ENCODE measurements at regions of chr7 and their contacts with region 1.

Region 1: DNA sequence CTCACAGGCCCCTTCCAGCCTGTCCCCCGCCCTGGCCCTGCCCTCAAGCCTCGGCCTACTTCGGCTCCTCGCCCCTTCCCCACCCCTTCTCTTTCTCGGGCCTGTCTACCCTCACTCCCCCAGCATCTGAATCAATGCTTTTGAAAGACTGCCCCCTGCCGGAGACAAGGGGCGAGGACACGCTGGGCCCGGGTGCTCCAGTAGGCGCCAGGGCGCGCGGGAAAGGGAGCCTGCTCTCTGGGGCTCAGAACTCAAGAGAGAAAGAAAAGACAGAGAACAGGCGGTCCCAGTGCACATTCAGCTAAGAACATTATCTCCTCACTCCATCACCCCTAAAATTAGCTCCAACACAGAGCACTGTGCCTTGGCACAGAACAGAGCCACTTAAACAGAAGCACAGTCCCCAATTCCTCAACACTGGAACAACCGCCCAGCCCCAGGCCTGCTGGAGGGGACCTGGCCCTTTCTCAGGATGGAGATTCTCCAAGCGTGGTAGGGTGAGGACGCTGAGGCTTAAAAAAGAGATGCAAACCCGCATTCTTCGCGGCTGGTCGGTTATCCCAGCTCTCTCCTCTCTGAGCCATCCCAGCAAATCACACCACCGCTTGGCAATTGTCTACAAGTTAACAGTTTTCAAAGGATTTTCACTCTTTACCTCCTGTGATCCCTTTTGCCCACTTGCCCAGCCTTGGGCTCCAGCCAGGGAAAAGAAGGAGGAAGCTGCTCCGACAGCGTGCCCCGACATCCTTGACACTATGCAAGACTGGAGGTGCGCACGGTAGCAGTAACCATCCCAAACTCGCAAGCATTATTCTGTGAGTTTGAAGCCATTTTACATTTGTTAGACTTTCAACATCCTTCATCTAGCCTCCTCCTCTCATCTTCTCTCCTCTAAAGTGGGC is 2.1 kb downstream of the GIGYF1 start:
- DNase-seq: peak; percentile 91
- ATAC-seq: peak; percentile 78
- H3K4me3 Mint-ChIP-seq: peak overlapping the region; percentile 96
- H3K27ac Mint-ChIP-seq: peak overlapping the region; percentile 97
- H3K4me1 Mint-ChIP-seq: peaks cover 42% of the 10 kb centered on the region
- H3K27me3 Mint-ChIP-seq: no peaks in the 10 kb centered on the region
- CTCF ChIP-seq: peak; percentile 91

Region 2: GRCh38 chr7:100366411-100367238 is 325.3 kb before region 1 on chr7:
- CTCF ChIA-PET with region 1: no interaction called
- POLR2A ChIA-PET with region 1: no interaction called
- DNase-seq: no peak
- ATAC-seq: peak; percentile 2; the same call in 1 of the 2 replicates
- H3K4me3 Mint-ChIP-seq: no peak overlapping the region
- H3K27ac Mint-ChIP-seq: peak overlapping the region; percentile 72
- H3K4me1 Mint-ChIP-seq: peaks cover 31% of the 10 kb centered on the region
- H3K27me3 Mint-ChIP-seq: no peaks in the 10 kb centered on the region
- CTCF ChIP-seq: no peak

Region 3: DNA sequence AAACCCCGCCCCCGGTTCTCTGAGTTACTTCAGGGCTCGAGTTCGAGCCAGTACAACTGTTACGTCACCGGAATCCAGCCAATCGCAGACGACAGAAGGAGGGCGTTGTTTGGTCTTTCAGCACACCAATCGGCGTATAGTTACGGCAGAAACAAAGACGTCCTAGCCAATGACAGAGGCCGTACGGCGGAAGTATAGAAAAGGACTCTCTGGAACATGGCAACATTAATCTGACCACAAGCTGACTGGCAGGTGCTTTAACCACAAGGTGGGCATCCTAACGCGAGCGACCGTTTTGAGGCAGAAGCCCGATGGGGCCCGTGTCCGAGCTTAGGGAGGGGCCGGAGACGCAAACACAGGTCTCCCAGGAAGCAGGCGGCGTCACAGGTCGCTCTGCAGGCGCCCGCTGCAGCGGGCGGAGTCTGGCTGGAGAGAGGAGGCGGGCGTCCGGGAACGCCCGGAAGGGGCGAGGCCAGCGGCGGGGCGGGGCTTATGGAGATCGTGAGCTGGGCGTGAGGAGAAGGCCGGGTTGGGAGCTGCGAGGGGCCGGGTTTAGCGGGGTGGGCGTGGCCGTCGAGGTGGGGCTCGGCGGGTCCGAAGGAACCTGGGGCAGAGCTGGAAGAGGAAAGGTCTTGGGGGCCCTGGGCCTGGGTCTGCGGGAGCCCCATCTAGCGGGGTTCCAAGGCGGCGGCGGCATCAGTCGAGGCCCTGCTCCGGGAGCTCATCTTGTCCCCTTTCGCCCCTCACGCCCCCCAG is 79.8 kb before region 1 on chr7 and contains the start of gene MOSPD3:
- CTCF ChIA-PET with region 1: interaction called, 32 read pairs
- POLR2A ChIA-PET with region 1: no interaction called
- DNase-seq: peak; percentile 99
- ATAC-seq: peak; percentile 93
- H3K4me3 Mint-ChIP-seq: peak within 1 kb of the TSS; percentile 94
- H3K27ac Mint-ChIP-seq: peak within 1 kb of the TSS; percentile 100
- H3K4me1 Mint-ChIP-seq: peaks cover 6% of the 10 kb centered on the region; the same call in 1 of the 2 replicates
- H3K27me3 Mint-ChIP-seq: no peaks in the 10 kb centered on the region; the same call in 1 of the 2 replicates
- CTCF ChIP-seq: no peak
- total RNA-seq, gene MOSPD3: 21.9 to 22.4 TPM (median 22.0 TPM) in 3 replicates

Region 4: DNA sequence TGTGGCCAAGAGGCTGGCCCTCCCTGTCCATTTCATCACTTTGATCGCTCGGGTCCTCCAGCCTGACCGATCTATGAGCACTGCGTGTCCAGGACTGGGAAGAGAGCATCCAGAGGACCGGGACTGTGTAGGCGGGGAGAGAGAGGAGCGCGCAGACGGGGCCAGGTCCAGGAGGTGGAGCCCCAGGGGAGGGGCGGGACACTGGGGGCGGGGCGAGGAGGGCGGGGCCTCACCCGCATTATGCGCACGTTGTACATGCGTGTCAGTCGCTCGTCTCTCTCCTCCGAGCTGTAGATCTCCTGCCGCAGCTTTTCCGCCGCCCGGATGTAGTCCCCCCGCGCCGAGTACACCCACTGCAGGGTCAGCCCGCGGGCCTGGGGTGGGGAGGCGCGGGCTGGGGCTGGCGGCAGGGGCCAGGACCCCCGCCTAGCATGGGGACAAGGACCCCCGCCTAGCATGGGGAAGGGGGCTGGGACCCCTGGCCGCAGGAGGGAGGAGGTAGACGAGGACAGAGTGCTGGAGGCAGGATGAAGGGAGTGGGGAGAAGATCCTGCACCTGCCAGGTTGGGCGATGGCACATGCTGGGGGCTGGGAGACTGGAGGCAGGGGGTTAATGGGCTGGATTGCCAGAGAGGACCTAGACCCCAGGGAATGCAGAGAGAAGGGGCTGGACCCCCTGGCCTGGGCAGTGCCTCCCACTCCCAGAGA is 65.2 kb before region 1 on chr7:
- CTCF ChIA-PET with region 1: interaction called, 12 read pairs
- POLR2A ChIA-PET with region 1: no interaction called
- DNase-seq: peak; percentile 87
- ATAC-seq: peak; percentile 89
- H3K4me3 Mint-ChIP-seq: peak overlapping the region; percentile 65
- H3K27ac Mint-ChIP-seq: no peak overlapping the region
- H3K4me1 Mint-ChIP-seq: peaks cover 7% of the 10 kb centered on the region
- H3K27me3 Mint-ChIP-seq: peaks cover 22% of the 10 kb centered on the region
- CTCF ChIP-seq: no peak

Region 5: GRCh38 chr7:100673300-100673941 is 18.5 kb before region 1 on chr7 and contains the start of gene GNB2:
- CTCF ChIA-PET with region 1: interaction called, 18 read pairs
- POLR2A ChIA-PET with region 1: interaction called, 4 read pairs
- DNase-seq: peak; percentile 100
- ATAC-seq: peak; percentile 77
- H3K4me3 Mint-ChIP-seq: peak within 1 kb of the TSS; percentile 88
- H3K27ac Mint-ChIP-seq: peak within 1 kb of the TSS; percentile 92
- H3K4me1 Mint-ChIP-seq: peaks cover 4% of the 10 kb centered on the region
- H3K27me3 Mint-ChIP-seq: peaks cover 39% of the 10 kb centered on the region
- CTCF ChIP-seq: no peak
- total RNA-seq, gene GNB2: 182 to 194 TPM (median 184 TPM) in 3 replicates

Region 6: GRCh38 chr7:100680167-100680575 is 11.8 kb before region 1 on chr7:
- CTCF ChIA-PET with region 1: interaction called, 18 read pairs
- POLR2A ChIA-PET with region 1: interaction called, 4 read pairs
- DNase-seq: no peak
- ATAC-seq: no peak
- H3K4me3 Mint-ChIP-seq: no peak overlapping the region
- H3K27ac Mint-ChIP-seq: peak overlapping the region; percentile 62; the same call in 1 of the 2 replicates
- H3K4me1 Mint-ChIP-seq: peaks cover 11% of the 10 kb centered on the region
- H3K27me3 Mint-ChIP-seq: no peaks in the 10 kb centered on the region
- CTCF ChIP-seq: no peak